ENCODE measurements at regions of chr6 and their contacts with region 1.

Region 1: GRCh38 chr6:77457720-77458349 is 5.5 kb downstream of the HTR1B start:
- DNase-seq: no peak
- ATAC-seq: peak; percentile 79
- H3K4me3 ChIP-seq: no peak overlapping the region
- H3K27ac ChIP-seq: no peak overlapping the region
- H3K4me1 ChIP-seq: no peaks in the 10 kb centered on the region
- H3K27me3 ChIP-seq: peaks cover 4% of the 10 kb centered on the region in 2 experiments
- CTCF ChIP-seq: peak; percentile 69 to 71 (median 70)
- EP300 ChIP-seq: no peak
- POLR2A ChIP-seq: no peak
- RAD21 ChIP-seq: peak; percentile 56

Region 2: DNA sequence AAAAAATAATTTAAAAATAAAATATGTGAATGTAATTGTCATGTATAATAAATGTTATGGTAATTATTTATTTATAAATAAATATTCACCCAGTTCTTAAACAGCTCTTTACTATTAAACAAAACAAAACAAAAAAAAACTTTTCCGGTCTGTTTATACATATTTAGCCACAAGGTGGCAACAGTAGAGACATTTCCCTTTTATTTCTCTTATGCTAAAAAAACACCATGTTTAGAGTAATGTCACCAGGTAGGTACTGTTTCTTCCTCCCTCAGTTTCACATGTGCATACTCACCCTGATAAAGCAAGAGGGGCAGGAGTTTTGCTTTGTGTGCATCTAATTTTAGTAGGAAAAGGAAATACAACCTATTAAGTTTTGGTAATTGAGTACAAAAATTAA is 775.0 kb before region 1 on chr6:
- CTCF ChIA-PET with region 1: interaction called, 5 read pairs
- POLR2A ChIA-PET with region 1: no interaction called
- RAD21 ChIA-PET with region 1: no interaction called
- SMC1A ChIA-PET with region 1: interaction called, 4 read pairs
- in situ Hi-C with region 1: no loop called
- intact Hi-C with region 1: loop called (anchors 5 kb)
- DNase-seq: no peak
- ATAC-seq: peak; percentile 55; the same call in 2 of the 3 replicates
- H3K4me3 ChIP-seq: no peak overlapping the region
- H3K27ac ChIP-seq: no peak overlapping the region
- H3K4me1 ChIP-seq: no peaks in the 10 kb centered on the region
- H3K27me3 ChIP-seq: no peaks in the 10 kb centered on the region
- CTCF ChIP-seq: peak in 2 of 3 experiments; percentile 21 to 31; a peak in 3 of 6 replicates
- EP300 ChIP-seq: no peak
- POLR2A ChIP-seq: no peak
- RAD21 ChIP-seq: no peak

Region 3: DNA sequence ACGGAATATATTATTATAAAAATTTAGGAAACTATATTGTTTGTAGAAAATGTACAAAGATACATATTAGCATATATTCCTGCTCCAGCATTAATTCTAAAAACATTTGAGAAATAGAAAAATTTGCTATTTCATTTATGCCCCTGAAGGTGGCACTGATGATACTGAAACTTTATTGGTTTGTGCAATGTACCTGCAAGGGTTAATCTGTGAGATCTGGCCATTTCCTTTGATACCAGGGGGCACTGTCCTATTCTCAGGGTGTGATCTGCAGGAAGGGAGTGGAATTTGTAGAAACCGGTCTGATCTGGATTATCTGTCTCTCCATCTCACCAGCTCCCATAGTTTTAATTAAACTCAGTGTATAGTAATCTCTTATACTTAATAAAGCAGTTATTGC is 760.2 kb before region 1 on chr6:
- CTCF ChIA-PET with region 1: interaction called, 3 read pairs
- POLR2A ChIA-PET with region 1: no interaction called
- RAD21 ChIA-PET with region 1: no interaction called
- SMC1A ChIA-PET with region 1: no interaction called
- in situ Hi-C with region 1: no loop called
- intact Hi-C with region 1: loop called (anchors 5 kb)
- DNase-seq: no peak
- ATAC-seq: no peak
- H3K4me3 ChIP-seq: no peak overlapping the region
- H3K27ac ChIP-seq: no peak overlapping the region
- H3K4me1 ChIP-seq: no peaks in the 10 kb centered on the region
- H3K27me3 ChIP-seq: no peaks in the 10 kb centered on the region
- CTCF ChIP-seq: no peak
- EP300 ChIP-seq: no peak
- POLR2A ChIP-seq: no peak
- RAD21 ChIP-seq: 0 out of 2 replicates have a peak, but pooled peaks have one; percentile 8

Region 4: GRCh38 chr6:76877238-76877553 is 580.6 kb before region 1 on chr6:
- CTCF ChIA-PET with region 1: no interaction called
- POLR2A ChIA-PET with region 1: no interaction called
- RAD21 ChIA-PET with region 1: no interaction called
- SMC1A ChIA-PET with region 1: no interaction called
- in situ Hi-C with region 1: no loop called
- intact Hi-C with region 1: loop called (anchors 10 kb)
- DNase-seq: no peak
- ATAC-seq: no peak
- H3K4me3 ChIP-seq: no peak overlapping the region
- H3K27ac ChIP-seq: no peak overlapping the region
- H3K4me1 ChIP-seq: no peaks in the 10 kb centered on the region
- H3K27me3 ChIP-seq: no peaks in the 10 kb centered on the region
- CTCF ChIP-seq: no peak
- EP300 ChIP-seq: no peak
- POLR2A ChIP-seq: no peak
- RAD21 ChIP-seq: no peak

Region 5: GRCh38 chr6:77173472-77174074 is 284.3 kb before region 1 on chr6:
- CTCF ChIA-PET with region 1: interaction called, 31 read pairs
- POLR2A ChIA-PET with region 1: no interaction called
- RAD21 ChIA-PET with region 1: interaction called, 3 read pairs
- SMC1A ChIA-PET with region 1: interaction called, 17 read pairs
- in situ Hi-C with region 1: no loop called
- intact Hi-C with region 1: loop called (anchors 1 kb)
- DNase-seq: no peak
- ATAC-seq: peak; percentile 75
- H3K4me3 ChIP-seq: no peak overlapping the region
- H3K27ac ChIP-seq: no peak overlapping the region
- H3K4me1 ChIP-seq: no peaks in the 10 kb centered on the region
- H3K27me3 ChIP-seq: no peaks in the 10 kb centered on the region
- CTCF ChIP-seq: peak in 1 of 3 experiments; percentile 46; a peak in 1 of 6 replicates
- EP300 ChIP-seq: no peak
- POLR2A ChIP-seq: no peak
- RAD21 ChIP-seq: no peak

Region 6: GRCh38 chr6:77341058-77341986 is 116.5 kb before region 1 on chr6:
- CTCF ChIA-PET with region 1: interaction called, 10 read pairs
- POLR2A ChIA-PET with region 1: no interaction called
- RAD21 ChIA-PET with region 1: interaction called, 8 read pairs
- SMC1A ChIA-PET with region 1: no interaction called
- in situ Hi-C with region 1: no loop called
- intact Hi-C with region 1: no loop called
- DNase-seq: no peak
- ATAC-seq: no peak
- H3K4me3 ChIP-seq: no peak overlapping the region
- H3K27ac ChIP-seq: no peak overlapping the region
- H3K4me1 ChIP-seq: no peaks in the 10 kb centered on the region
- H3K27me3 ChIP-seq: no peaks in the 10 kb centered on the region
- CTCF ChIP-seq: no peak
- EP300 ChIP-seq: no peak
- POLR2A ChIP-seq: no peak
- RAD21 ChIP-seq: no peak